ENCODE measurements at regions of chr1 and their contacts with region 1.

Region 1: GRCh38 chr1:30525971-30526651 is 197.3 kb downstream of the MATN1 start:
- DNase-seq: no peak
- H3K4me3 ChIP-seq: no peak overlapping the region
- H3K27ac ChIP-seq: no peak overlapping the region
- H3K4me1 ChIP-seq: no peaks in the 10 kb centered on the region
- H3K27me3 ChIP-seq: no peaks in the 10 kb centered on the region
- CTCF ChIP-seq: no peak
- POLR2A ChIP-seq: no peak

Region 2: DNA sequence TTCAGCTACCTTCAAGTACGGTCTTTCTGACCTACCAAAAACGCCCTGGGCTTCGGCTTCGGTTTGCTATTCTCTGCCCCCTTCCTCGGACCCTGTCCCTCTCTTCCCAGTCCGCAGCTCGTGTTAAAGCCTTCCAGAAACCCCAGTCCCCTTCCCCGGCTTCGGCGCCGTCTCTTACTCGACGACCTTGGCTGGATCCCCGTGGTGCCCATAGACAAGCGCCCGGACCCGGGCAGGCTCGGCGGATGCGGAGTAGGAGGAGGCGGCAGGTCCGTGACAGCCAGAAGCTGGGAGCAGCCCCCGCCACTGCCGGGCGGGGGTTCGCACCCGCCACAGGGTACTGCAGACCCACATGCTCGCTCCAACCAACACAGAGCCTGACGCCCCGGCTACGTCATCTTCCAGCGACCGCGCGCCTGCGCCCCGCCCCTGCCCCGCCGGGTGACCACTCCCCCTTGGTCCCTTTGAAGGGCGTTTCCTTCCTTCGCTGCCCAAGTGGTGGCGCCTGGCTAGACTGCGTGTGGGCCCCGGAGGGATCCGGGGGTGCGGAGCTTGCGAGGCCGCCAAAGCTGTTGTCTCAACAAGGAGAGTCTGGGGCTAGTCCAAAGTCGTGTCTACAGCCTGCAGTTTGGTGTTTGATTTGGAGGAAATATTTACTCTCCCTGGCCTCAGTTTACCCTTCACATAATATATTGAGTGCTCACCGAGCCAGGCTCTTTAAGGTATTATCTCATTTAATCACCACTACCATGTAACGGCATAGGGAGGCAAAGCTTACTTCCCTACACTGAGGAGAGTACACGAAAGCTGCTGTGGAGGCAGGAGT is 1295.3 kb before region 1 on chr1 and contains the start of gene MECR:
- intact Hi-C with region 1: loop called (anchors 10 kb)
- DNase-seq: peak; percentile 89
- H3K4me3 ChIP-seq: peak within 1 kb of the TSS; percentile 63 to 66
- H3K27ac ChIP-seq: peak within 1 kb of the TSS; percentile 29 to 61
- H3K4me1 ChIP-seq: peaks cover 3% of the 10 kb centered on the region
- H3K27me3 ChIP-seq: no peaks in the 10 kb centered on the region
- CTCF ChIP-seq: peak in 3 of 4 experiments; percentile 25 to 48 (median 40)
- POLR2A ChIP-seq: peak; percentile 74
- total RNA-seq, gene MECR: 17.7 to 49.3 TPM

Region 3: GRCh38 chr1:30700528-30701257 is 174.6 kb after region 1 on chr1:
- intact Hi-C with region 1: loop called (anchors 5 kb)
- DNase-seq: no peak
- H3K4me3 ChIP-seq: no peak overlapping the region
- H3K27ac ChIP-seq: peak overlapping the region; percentile 34 to 43
- H3K4me1 ChIP-seq: no peaks in the 10 kb centered on the region
- H3K27me3 ChIP-seq: no peaks in the 10 kb centered on the region
- CTCF ChIP-seq: no peak
- POLR2A ChIP-seq: no peak